T-cell (primary cell): ENCODE measurements at regions of chr4 and their contacts with region 1.

Region 1: GRCh38 chr4:42568610-42569207 is 88.2 kb downstream of the ATP8A1 start:
- DNase-seq: peak in 33 of 35 experiments; percentile 20 to 85 (median 55)
- ATAC-seq: peak; percentile 75 to 95 (median 86)
- H3K4me3 ChIP-seq: no peak overlapping the region
- H3K4me3 Mint-ChIP-seq: no peak overlapping the region
- H3K27ac ChIP-seq: no peak overlapping the region
- H3K27ac Mint-ChIP-seq: no peak overlapping the region
- H3K4me1 ChIP-seq: no peaks in the 10 kb centered on the region
- H3K4me1 Mint-ChIP-seq: peaks cover 0 to 4% (median 0%) of the 10 kb centered on the region in 3 donors
- H3K27me3 ChIP-seq: no peaks in the 10 kb centered on the region
- H3K27me3 Mint-ChIP-seq: no peaks in the 10 kb centered on the region

Region 2: GRCh38 chr4:42167709-42168108 is 401.0 kb before region 1 on chr4:
- CTCF ChIA-PET with region 1: no interaction called
- POLR2A ChIA-PET with region 1: no interaction called
- DNase-seq: no peak
- ATAC-seq: no peak
- H3K4me3 ChIP-seq: no peak overlapping the region
- H3K4me3 Mint-ChIP-seq: no peak overlapping the region
- H3K27ac ChIP-seq: no peak overlapping the region
- H3K27ac Mint-ChIP-seq: no peak overlapping the region
- H3K4me1 ChIP-seq: no peaks in the 10 kb centered on the region
- H3K4me1 Mint-ChIP-seq: no peaks in the 10 kb centered on the region
- H3K27me3 ChIP-seq: peaks cover 0 to 8% of the 10 kb centered on the region in 2 experiments
- H3K27me3 Mint-ChIP-seq: peaks cover 10 to 12% of the 10 kb centered on the region in 2 donors

Region 3: GRCh38 chr4:42656944-42657792 is 88.5 kb after region 1 on chr4 and contains the start of gene ATP8A1:
- CTCF ChIA-PET with region 1: interaction called in 1 of 2 experiments, 17 read pairs
- POLR2A ChIA-PET with region 1: no interaction called
- DNase-seq: peak; percentile 80 to 97 (median 92)
- ATAC-seq: peak; percentile 88 to 95 (median 89)
- H3K4me3 ChIP-seq: peak within 1 kb of the TSS; percentile 95 to 96
- H3K4me3 Mint-ChIP-seq: peak within 1 kb of the TSS; percentile 97 to 98 (median 98)
- H3K27ac ChIP-seq: peak within 1 kb of the TSS; percentile 89
- H3K27ac Mint-ChIP-seq: peak within 1 kb of the TSS; percentile 96 to 99
- H3K4me1 ChIP-seq: peaks cover 23% of the 10 kb centered on the region in 2 experiments
- H3K4me1 Mint-ChIP-seq: peaks cover 38 to 51% (median 50%) of the 10 kb centered on the region in 3 donors
- H3K27me3 ChIP-seq: no peaks in the 10 kb centered on the region
- H3K27me3 Mint-ChIP-seq: no peaks in the 10 kb centered on the region
- total RNA-seq, gene ATP8A1: 33.7 to 73.2 (median 47.8) TPM

Region 4: GRCh38 chr4:42750091-42750490 is 181.4 kb after region 1 on chr4:
- CTCF ChIA-PET with region 1: interaction called, 6 to 39 read pairs
- POLR2A ChIA-PET with region 1: no interaction called
- DNase-seq: peak in 29 of 35 experiments; percentile 11 to 71 (median 27)
- ATAC-seq: peak in 3 of 4 experiments; percentile 64 to 84 (median 64)
- H3K4me3 ChIP-seq: no peak overlapping the region
- H3K4me3 Mint-ChIP-seq: no peak overlapping the region
- H3K27ac ChIP-seq: no peak overlapping the region
- H3K27ac Mint-ChIP-seq: no peak overlapping the region
- H3K4me1 ChIP-seq: no peaks in the 10 kb centered on the region
- H3K4me1 Mint-ChIP-seq: no peaks in the 10 kb centered on the region
- H3K27me3 ChIP-seq: no peaks in the 10 kb centered on the region
- H3K27me3 Mint-ChIP-seq: no peaks in the 10 kb centered on the region

Region 5: DNA sequence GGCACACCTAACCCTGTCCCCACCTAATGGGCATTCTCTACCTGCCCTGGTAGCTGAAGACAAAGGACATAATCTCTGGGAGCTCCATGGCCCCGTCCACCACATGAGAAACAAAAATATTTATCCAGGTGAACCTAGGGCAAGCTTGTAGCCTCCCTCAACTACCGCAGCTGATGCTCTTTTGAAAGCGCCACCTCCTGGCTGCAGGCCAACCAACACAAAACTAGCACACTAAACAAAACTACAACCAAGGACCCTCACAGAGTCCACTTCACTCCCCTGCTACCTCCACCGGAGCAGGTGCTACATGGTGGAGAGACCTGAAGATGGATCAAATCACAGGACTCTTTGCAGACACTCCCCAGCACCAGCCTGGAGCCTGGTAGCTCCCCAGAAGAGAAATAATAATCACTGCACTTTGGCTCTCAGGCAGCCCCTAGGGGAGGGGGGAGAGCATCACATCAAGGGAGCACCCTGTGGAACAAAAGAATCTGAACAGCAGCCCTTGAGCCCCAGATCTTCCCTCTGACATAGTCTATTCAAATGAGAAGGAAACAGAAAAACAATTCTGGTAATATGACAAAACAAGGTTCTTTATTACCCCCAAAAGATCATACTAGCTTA is 199.5 kb after region 1 on chr4:
- CTCF ChIA-PET with region 1: interaction called, 3 to 14 read pairs
- POLR2A ChIA-PET with region 1: no interaction called
- DNase-seq: peak in 9 of 35 experiments; percentile 1 to 29 (median 6)
- ATAC-seq: no peak
- H3K4me3 ChIP-seq: no peak overlapping the region
- H3K4me3 Mint-ChIP-seq: no peak overlapping the region
- H3K27ac ChIP-seq: no peak overlapping the region
- H3K27ac Mint-ChIP-seq: no peak overlapping the region
- H3K4me1 ChIP-seq: no peaks in the 10 kb centered on the region
- H3K4me1 Mint-ChIP-seq: no peaks in the 10 kb centered on the region
- H3K27me3 ChIP-seq: peaks cover 0 to 7% of the 10 kb centered on the region in 2 experiments
- H3K27me3 Mint-ChIP-seq: peaks cover 10 to 12% of the 10 kb centered on the region in 2 donors

Region 6: DNA sequence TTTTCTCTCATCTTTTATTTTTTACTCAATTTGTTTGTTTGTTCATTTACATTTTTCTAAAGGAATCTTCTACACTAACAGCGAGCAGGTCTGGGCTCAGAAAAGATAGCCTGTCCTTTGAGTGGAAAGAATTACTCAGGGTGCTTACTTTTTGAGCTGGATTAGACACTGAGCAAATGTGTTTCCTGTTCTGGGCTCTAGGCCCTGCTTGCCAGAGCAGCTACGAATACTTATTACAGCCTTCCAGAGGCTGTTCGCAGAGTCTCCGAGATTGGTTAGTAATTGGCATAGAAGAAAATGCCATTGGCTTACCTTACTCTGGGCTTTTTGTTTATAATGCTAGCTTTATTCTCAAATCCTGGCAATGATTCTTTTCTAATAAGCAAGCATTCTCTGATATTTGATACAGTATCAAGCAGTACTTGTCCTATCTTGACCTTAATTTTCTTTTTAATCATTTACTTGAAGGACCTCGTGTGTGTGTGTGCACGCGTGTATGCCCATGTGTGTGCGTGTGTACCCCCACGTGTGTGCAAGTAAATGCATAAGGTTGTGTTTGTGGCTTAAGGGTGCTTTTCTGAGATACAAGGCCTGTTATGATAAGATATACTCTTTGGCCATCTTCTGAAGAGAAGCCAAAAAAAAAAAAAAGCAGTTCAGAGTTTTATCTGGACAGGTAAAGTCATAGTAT is 247.6 kb after region 1 on chr4:
- CTCF ChIA-PET with region 1: interaction called, 4 to 19 read pairs
- POLR2A ChIA-PET with region 1: no interaction called
- DNase-seq: no peak
- ATAC-seq: no peak
- H3K4me3 ChIP-seq: no peak overlapping the region
- H3K4me3 Mint-ChIP-seq: no peak overlapping the region
- H3K27ac ChIP-seq: no peak overlapping the region
- H3K27ac Mint-ChIP-seq: no peak overlapping the region
- H3K4me1 ChIP-seq: no peaks in the 10 kb centered on the region
- H3K4me1 Mint-ChIP-seq: no peaks in the 10 kb centered on the region
- H3K27me3 ChIP-seq: peaks cover 0 to 2% of the 10 kb centered on the region in 2 experiments
- H3K27me3 Mint-ChIP-seq: peaks cover 1 to 6% of the 10 kb centered on the region in 2 donors

Region 7: DNA sequence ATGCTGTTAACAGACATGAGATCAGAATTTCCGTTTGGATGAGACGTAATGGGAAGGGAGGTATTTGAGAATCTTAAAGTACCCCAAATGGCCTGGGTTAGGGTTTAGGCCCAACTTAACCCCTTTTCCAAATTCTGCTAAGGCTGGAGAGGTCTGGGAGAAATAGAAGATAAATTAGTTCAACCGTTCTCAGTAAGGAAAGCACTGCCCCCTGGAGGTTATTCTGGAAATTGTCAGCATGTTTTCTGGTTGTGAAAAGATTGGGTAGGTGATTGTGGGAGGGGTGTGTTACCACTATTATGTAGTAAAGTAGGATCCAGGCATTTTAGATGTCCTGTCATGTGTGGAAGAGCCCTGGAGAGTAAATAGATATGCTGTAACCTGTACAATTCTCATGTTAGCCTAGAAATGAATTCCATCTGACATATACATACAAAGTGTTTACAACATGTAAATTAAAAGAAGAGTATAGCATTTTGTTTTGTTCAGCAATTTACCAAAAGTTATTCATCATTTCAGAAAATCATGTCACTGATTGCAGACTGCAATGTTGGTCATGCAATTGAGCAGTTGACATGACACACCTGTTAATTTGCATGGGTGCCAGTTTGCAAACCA is 297.0 kb after region 1 on chr4:
- CTCF ChIA-PET with region 1: interaction called, 7 to 35 read pairs
- POLR2A ChIA-PET with region 1: no interaction called
- DNase-seq: peak in 30 of 35 experiments; percentile 1 to 68 (median 22)
- ATAC-seq: no peak
- H3K4me3 ChIP-seq: no peak overlapping the region
- H3K4me3 Mint-ChIP-seq: no peak overlapping the region
- H3K27ac ChIP-seq: no peak overlapping the region
- H3K27ac Mint-ChIP-seq: no peak overlapping the region
- H3K4me1 ChIP-seq: no peaks in the 10 kb centered on the region
- H3K4me1 Mint-ChIP-seq: no peaks in the 10 kb centered on the region
- H3K27me3 ChIP-seq: no peaks in the 10 kb centered on the region
- H3K27me3 Mint-ChIP-seq: peaks cover 25 to 30% of the 10 kb centered on the region in 2 donors